ENCODE measurements at regions of chr17 and their contacts with region 1.

Region 1: GRCh38 chr17:35242805-35243560 is at the start of gene SLFN5:
- DNase-seq: peak; percentile 94 to 99 (median 97)
- H3K4me3 ChIP-seq: peak within 1 kb of the TSS; percentile 72 to 97 (median 76)
- H3K27ac ChIP-seq: peak within 1 kb of the TSS; percentile 96 to 97 (median 97)
- H3K4me1 ChIP-seq: peaks cover 20 to 30% of the 10 kb centered on the region in 2 donors
- H3K27me3 ChIP-seq: no peaks in the 10 kb centered on the region
- CTCF ChIP-seq: no peak
- POLR2A ChIP-seq: peak; percentile 94 to 97
- total RNA-seq, gene SLFN5: 3.2 to 57.8 (median 38.1) TPM

Region 2: GRCh38 chr17:35432176-35433074 is 189.4 kb after region 1 on chr17 and contains the start of gene SLFN12:
- intact Hi-C with region 1: loop called in 1 of 2 experiments (anchors 10 kb)
- DNase-seq: peak; percentile 70 to 87 (median 78)
- H3K4me3 ChIP-seq: peak within 1 kb of the TSS; percentile 2 to 89 (median 61)
- H3K27ac ChIP-seq: peak within 1 kb of the TSS; percentile 81 to 97 (median 90)
- H3K4me1 ChIP-seq: peaks cover 14 to 25% of the 10 kb centered on the region in 2 donors
- H3K27me3 ChIP-seq: no peaks in the 10 kb centered on the region
- CTCF ChIP-seq: no peak
- POLR2A ChIP-seq: peak in 1 of 2 donors; percentile 78
- total RNA-seq, gene SLFN12: 5.1 to 17.1 (median 12.7) TPM

Measured in adrenal gland (tissue), 19 donors.